ENCODE measurements at regions of chr5 and their contacts with region 1.

Region 1: GRCh38 chr5:168987543-168988300 is 313.2 kb downstream of the SLIT3 start:
- DNase-seq: peak; percentile 65
- H3K4me3 ChIP-seq: no peak overlapping the region
- H3K27ac ChIP-seq: no peak overlapping the region
- H3K4me1 ChIP-seq: peaks cover 10% of the 10 kb centered on the region
- H3K27me3 ChIP-seq: peaks cover 31% of the 10 kb centered on the region
- CTCF ChIP-seq: peak; percentile 89

Region 2: DNA sequence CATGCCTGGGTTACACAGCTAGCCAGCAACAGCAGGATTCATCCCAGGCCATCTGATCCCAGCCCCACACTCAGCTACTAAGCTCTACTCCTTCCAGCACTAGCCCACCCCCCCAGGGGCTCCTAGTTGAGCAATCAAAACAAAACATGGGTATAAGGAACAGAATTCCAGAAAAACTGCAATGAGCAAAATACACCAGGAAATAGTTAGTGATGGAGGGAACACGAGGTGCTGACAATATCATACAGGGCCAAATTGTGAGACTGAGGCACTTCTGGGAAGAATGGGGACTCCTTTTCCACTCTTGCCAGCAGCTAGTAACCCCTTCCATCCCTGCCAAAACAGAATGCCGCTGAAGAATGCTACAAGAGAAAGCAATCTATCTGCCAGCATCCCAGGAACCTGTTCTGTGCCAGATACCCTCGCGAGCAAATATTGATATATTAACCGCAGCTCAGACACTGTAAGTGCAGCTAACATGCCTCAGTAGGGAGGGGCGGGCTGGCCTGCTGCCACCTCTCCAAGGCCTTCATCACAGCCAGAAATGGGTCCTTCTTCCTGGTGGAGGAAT is 151.8 kb after region 1 on chr5:
- intact Hi-C with region 1: no loop called
- DNase-seq: peak; percentile 21
- H3K4me3 ChIP-seq: no peak overlapping the region
- H3K27ac ChIP-seq: no peak overlapping the region
- H3K4me1 ChIP-seq: peaks cover 29% of the 10 kb centered on the region
- H3K27me3 ChIP-seq: peaks cover 3% of the 10 kb centered on the region
- CTCF ChIP-seq: no peak

Region 3: GRCh38 chr5:169302491-169303118 is 314.9 kb after region 1 on chr5:
- intact Hi-C with region 1: loop called (anchors 10 kb)
- DNase-seq: peak; percentile 61
- H3K4me3 ChIP-seq: no peak overlapping the region
- H3K27ac ChIP-seq: no peak overlapping the region
- H3K4me1 ChIP-seq: peaks cover 23% of the 10 kb centered on the region
- H3K27me3 ChIP-seq: peaks cover 78% of the 10 kb centered on the region
- CTCF ChIP-seq: peak; percentile 90

Region 4: DNA sequence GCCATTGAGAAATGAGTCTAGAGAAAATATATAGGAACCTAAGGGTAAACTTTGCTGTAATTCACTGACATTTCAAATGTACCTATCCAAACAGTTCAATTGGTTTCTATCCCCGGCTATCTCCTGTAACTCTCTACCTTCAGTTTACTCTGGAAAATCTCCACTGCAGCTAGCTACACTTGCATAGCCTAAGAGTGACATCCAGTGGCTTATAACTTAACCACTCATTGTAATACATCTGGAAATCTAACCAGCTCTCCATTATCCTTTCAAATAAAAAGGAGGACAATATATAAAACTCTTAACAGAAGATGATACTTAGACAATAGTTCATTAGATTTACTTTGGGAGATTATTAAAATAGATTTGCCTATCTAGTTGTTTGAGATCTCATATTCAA is 560.6 kb after region 1 on chr5:
- intact Hi-C with region 1: loop called (anchors 5 kb)
- DNase-seq: no peak
- H3K4me3 ChIP-seq: no peak overlapping the region
- H3K27ac ChIP-seq: no peak overlapping the region
- H3K4me1 ChIP-seq: no peaks in the 10 kb centered on the region
- H3K27me3 ChIP-seq: peaks cover 74% of the 10 kb centered on the region
- CTCF ChIP-seq: peak; percentile 67

Region 5: DNA sequence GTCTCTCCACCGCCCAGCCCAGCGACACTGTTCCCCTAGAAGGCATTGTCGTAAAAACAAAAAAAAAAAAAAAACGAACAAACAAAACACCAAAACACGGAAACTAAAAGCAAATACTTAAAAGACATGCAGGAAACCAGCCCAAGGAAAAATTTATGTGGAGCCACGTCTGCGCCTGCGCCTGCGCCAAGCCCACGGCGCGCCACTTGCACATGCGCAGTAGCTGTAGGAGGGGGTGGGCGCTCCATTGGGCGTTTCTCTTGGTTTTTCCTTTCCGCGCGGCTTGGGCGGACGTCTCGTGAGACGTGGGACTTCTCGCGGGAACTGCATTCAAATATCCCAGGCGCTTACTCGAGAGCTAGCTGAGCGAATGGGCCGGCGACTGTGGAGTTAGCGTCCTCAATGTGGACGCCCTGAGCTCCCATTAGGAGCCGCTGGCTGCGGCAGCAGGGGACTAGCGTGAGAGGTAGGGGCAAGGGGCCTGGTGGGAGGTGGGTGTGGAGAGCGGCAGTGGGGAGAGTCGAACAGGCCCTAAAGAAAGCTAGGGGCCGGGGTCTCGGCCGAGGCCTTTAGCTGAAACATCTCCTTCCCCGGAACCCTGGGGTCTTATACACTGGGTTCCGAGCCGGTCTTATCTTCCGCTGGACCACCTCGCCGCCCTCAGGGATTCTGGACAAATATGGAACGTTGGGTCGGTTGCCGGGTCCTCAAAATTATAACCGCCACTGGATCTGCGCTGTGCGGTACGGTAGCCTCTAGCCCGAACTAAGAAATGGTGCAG is 595.9 kb after region 1 on chr5 and contains the start of gene SPDL1:
- intact Hi-C with region 1: loop called (anchors 10 kb)
- DNase-seq: peak; percentile 95
- H3K4me3 ChIP-seq: peak within 1 kb of the TSS; percentile 93
- H3K27ac ChIP-seq: peak within 1 kb of the TSS; percentile 79
- H3K4me1 ChIP-seq: peaks cover 24% of the 10 kb centered on the region
- H3K27me3 ChIP-seq: no peaks in the 10 kb centered on the region
- CTCF ChIP-seq: no peak
- total RNA-seq, gene SPDL1: 4.3 TPM